ENCODE measurements at regions of chr17 and their contacts with region 1.

Region 1: DNA sequence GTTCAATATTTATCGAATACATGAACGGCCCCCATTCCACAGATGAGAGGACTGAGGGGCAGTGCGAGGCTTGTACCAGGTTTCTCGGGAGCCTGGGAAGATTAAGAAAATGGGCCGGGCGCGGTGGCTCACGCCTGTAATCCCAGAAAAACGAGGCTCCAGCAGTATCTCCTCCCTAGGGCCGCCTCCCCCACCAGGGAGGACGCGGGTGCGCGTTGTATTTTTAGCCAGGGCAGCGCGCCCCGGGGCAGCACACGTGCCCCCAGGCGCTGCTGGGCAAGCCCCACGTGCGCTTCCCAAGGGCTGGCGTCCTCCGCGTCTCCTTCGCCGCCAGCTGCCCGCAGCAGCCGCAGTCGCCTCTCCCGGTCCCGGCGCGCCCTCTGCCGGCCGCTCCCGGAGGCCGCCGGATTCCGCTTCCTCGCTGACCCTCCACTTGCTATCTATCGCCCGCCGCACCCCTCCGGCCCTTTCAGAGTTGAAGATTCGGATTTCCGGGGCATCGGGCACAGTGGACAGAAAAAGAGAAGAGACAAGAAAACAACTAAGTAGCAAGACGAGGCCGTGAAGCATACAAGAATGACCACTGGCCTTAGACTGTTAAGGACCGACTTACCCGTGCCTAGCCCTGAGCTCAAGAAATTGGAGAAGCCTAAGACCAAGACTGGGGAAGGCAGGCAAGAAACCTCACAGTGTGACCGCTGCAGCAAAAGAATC is 1.9 kb upstream of the YBX2 start:
- DNase-seq: peak in 4 of 5 donors; percentile 56 to 68 (median 60)
- H3K4me3 ChIP-seq: no peak overlapping the region
- H3K4me3 Mint-ChIP-seq: peak overlapping the region in 4 of 7 donors; percentile 19 to 48 (median 46)
- H3K27ac ChIP-seq: no peak overlapping the region
- H3K27ac Mint-ChIP-seq: no peak overlapping the region
- H3K4me1 ChIP-seq: peaks cover 24% of the 10 kb centered on the region
- H3K4me1 Mint-ChIP-seq: peaks cover 14 to 27% (median 22%) of the 10 kb centered on the region in 3 donors
- H3K27me3 ChIP-seq: peaks cover 7% of the 10 kb centered on the region
- H3K27me3 Mint-ChIP-seq: peaks cover 19 to 23% of the 10 kb centered on the region in 2 donors

Region 2: GRCh38 chr17:7045909-7046724 is 250.2 kb before region 1 on chr17:
- CTCF ChIA-PET with region 1: interaction called, 13 read pairs
- POLR2A ChIA-PET with region 1: no interaction called
- DNase-seq: peak; percentile 25 to 66 (median 64)
- H3K4me3 ChIP-seq: peak overlapping the region; percentile 67
- H3K4me3 Mint-ChIP-seq: peak overlapping the region; percentile 78 to 93 (median 87)
- H3K27ac ChIP-seq: peak overlapping the region; percentile 53
- H3K27ac Mint-ChIP-seq: peak overlapping the region; percentile 83 to 96 (median 94)
- H3K4me1 ChIP-seq: peaks cover 30% of the 10 kb centered on the region
- H3K4me1 Mint-ChIP-seq: peaks cover 32 to 47% (median 33%) of the 10 kb centered on the region in 3 donors
- H3K27me3 ChIP-seq: no peaks in the 10 kb centered on the region
- H3K27me3 Mint-ChIP-seq: no peaks in the 10 kb centered on the region

Region 3: DNA sequence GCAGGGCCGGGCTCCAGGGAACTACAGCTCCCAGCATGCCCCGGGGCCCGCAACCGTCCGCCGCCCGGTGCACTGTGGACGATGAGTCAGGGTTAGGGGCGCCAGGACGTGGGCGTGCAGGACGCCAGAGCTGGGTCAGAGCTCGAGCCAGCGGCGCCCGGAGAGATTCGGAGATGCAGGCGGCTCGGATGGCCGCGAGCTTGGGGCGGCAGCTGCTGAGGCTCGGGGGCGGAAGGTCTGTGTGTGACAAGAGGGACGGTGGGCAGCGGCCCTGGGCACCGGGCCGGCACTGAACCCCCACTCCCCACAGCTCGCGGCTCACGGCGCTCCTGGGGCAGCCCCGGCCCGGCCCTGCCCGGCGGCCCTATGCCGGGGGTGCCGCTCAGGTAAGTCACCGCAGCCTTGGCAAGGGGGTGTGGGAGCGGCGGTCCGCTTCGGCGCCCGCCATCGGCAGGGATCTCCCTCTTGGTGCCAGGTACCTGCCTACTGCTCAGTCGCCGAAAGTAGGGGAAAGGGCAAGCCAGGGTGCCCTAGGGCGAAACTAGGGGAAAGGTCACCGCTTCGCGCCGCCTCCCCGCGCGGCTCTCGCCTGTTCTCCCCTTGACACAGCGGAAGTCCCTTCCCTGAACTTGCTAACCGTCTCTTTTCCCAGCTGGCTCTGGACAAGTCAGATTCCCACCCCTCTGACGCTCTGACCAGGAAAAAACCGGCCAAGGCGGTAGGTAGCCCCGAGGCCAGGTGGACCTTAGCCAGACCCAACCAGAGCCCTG is 76.3 kb before region 1 on chr17 and contains the starts of genes ACADVL and DLG4:
- CTCF ChIA-PET with region 1: interaction called, 23 read pairs
- POLR2A ChIA-PET with region 1: interaction called, 3 read pairs
- DNase-seq: peak; percentile 65 to 86 (median 70)
- H3K4me3 ChIP-seq: peak within 1 kb of the TSS; percentile 67
- H3K4me3 Mint-ChIP-seq: peak within 1 kb of the TSS; percentile 74 to 96 (median 93)
- H3K27ac ChIP-seq: peak within 1 kb of the TSS; percentile 70
- H3K27ac Mint-ChIP-seq: peak within 1 kb of the TSS; percentile 81 to 100 (median 98)
- H3K4me1 ChIP-seq: peaks cover 54% of the 10 kb centered on the region
- H3K4me1 Mint-ChIP-seq: peaks cover 35 to 62% (median 46%) of the 10 kb centered on the region in 3 donors
- H3K27me3 ChIP-seq: no peaks in the 10 kb centered on the region
- H3K27me3 Mint-ChIP-seq: no peaks in the 10 kb centered on the region
- total RNA-seq, gene ACADVL: 281 to 288 TPM
- total RNA-seq, gene DLG4: 3.5 to 4.4 TPM

Region 4: DNA sequence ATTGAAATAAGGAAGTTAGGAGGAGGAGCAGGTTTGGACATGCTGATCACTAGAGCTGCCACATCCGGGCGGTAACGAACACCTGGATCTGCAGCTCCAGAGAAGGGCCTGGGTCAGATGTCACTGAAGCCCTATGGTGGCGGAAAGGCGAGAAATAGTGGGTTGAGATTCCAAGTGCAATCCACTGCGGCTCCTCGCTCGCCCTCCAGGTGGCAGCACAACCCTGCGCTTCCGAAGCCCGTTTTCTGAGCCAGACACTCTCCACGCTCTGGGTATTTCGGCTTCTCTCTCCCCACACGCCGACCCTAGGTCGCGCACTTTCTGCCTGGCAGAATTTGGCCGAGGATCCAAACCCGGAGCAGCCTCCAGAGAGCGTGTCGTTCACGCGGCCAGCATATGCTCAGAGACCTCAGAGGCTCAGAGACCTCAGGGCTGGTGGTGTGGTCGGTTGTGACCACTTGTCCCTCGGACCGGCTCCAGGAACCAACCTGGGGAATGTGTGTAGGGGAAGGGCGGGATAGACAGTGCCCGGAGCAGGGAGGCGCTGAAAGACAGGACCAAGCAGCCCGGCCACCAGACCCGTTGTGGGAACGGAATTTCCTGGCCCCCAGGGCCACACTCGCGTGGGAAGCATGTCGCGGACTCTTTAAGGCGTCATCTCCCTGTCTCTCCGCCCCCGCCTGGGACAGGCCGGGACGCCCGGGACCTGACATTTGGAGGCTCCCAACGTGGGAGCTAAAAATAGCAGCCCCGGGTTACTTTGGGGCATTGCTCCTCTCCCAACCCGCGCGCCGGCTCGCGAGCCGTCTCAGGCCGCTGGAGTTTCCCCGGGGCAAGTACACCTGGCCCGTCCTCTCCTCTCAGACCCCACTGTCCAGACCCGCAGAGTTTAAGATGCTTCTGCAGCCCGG is 15.6 kb before region 1 on chr17:
- CTCF ChIA-PET with region 1: interaction called, 87 read pairs
- POLR2A ChIA-PET with region 1: interaction called, 6 read pairs
- DNase-seq: peak; percentile 77 to 89 (median 81)
- H3K4me3 ChIP-seq: peak overlapping the region; percentile 54
- H3K4me3 Mint-ChIP-seq: peak overlapping the region; percentile 79 to 92 (median 80)
- H3K27ac ChIP-seq: no peak overlapping the region
- H3K27ac Mint-ChIP-seq: peak overlapping the region in 7 of 8 donors; percentile 56 to 92 (median 71)
- H3K4me1 ChIP-seq: peaks cover 20% of the 10 kb centered on the region
- H3K4me1 Mint-ChIP-seq: peaks cover 13 to 25% (median 14%) of the 10 kb centered on the region in 3 donors
- H3K27me3 ChIP-seq: peaks cover 8% of the 10 kb centered on the region
- H3K27me3 Mint-ChIP-seq: peaks cover 21 to 32% of the 10 kb centered on the region in 2 donors

Region 5: GRCh38 chr17:7306911-7307686 is 10.8 kb after region 1 on chr17 and contains the start of gene EIF5A:
- CTCF ChIA-PET with region 1: interaction called, 17 read pairs
- POLR2A ChIA-PET with region 1: interaction called, 8 read pairs
- DNase-seq: peak; percentile 100
- H3K4me3 ChIP-seq: peak within 1 kb of the TSS; percentile 62
- H3K4me3 Mint-ChIP-seq: peak within 1 kb of the TSS; percentile 92 to 99 (median 95)
- H3K27ac ChIP-seq: peak within 1 kb of the TSS; percentile 98
- H3K27ac Mint-ChIP-seq: peak within 1 kb of the TSS; percentile 97 to 99 (median 99)
- H3K4me1 ChIP-seq: peaks cover 30% of the 10 kb centered on the region
- H3K4me1 Mint-ChIP-seq: peaks cover 36 to 39% (median 38%) of the 10 kb centered on the region in 3 donors
- H3K27me3 ChIP-seq: no peaks in the 10 kb centered on the region
- H3K27me3 Mint-ChIP-seq: peaks cover 0 to 5% of the 10 kb centered on the region in 2 donors
- total RNA-seq, gene EIF5A: 1,533 to 1,595 TPM

Region 6: GRCh38 chr17:7336240-7337175 is 40.2 kb after region 1 on chr17 and contains the start of gene ACAP1:
- CTCF ChIA-PET with region 1: interaction called, 23 read pairs
- POLR2A ChIA-PET with region 1: interaction called, 6 read pairs
- DNase-seq: peak; percentile 78 to 90 (median 81)
- H3K4me3 ChIP-seq: peak within 1 kb of the TSS; percentile 99
- H3K4me3 Mint-ChIP-seq: peak within 1 kb of the TSS; percentile 88 to 98 (median 93)
- H3K27ac ChIP-seq: peak within 1 kb of the TSS; percentile 74
- H3K27ac Mint-ChIP-seq: peak within 1 kb of the TSS; percentile 89 to 98 (median 97)
- H3K4me1 ChIP-seq: peaks cover 69% of the 10 kb centered on the region
- H3K4me1 Mint-ChIP-seq: peaks cover 47 to 68% (median 66%) of the 10 kb centered on the region in 3 donors
- H3K27me3 ChIP-seq: no peaks in the 10 kb centered on the region
- H3K27me3 Mint-ChIP-seq: no peaks in the 10 kb centered on the region
- total RNA-seq, gene ACAP1: 216 to 225 TPM

Region 7: DNA sequence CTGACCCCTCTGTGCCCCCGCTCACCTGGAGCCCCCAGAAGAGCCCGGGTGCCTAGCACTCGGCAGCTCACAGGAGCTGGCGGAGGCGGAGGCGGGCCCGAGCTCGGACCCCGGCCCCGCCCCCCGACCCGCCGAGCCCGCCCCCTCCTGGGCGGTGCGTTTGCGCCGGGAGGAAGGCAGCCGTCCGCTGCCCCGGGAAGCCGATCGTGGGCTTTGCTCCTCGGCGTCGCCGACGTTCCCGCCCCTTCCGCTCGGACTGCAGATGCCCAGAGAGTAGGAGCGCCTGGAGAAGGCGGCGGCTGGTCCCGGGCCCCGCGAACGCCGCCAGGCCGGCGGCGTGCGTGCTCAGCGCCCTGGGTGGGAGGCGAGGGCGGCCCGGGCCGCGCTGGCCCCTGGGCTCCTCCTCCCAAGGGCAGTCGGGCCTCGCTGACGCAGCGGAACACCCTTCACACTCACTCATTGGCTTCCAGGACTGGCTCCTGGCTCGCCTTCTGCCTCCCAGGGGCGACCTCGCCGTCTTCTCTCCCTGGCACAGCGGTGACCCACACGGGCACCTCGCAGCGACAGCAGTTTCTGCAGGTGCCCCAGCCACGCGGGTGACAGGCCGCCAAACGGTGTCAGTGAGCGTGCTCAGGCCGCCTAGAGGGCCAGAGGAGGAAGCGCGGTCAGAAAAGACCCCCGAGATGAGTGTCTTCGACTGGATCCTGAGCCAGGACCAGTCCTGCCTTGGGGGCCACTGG is 98.3 kb after region 1 on chr17 and contains the start of gene PLSCR3:
- CTCF ChIA-PET with region 1: no interaction called
- POLR2A ChIA-PET with region 1: no interaction called
- DNase-seq: peak; percentile 76 to 86 (median 83)
- H3K4me3 ChIP-seq: peak within 1 kb of the TSS; percentile 88
- H3K4me3 Mint-ChIP-seq: peak within 1 kb of the TSS; percentile 91 to 99 (median 95)
- H3K27ac ChIP-seq: peak within 1 kb of the TSS; percentile 80
- H3K27ac Mint-ChIP-seq: peak within 1 kb of the TSS; percentile 90 to 98 (median 96)
- H3K4me1 ChIP-seq: peaks cover 35% of the 10 kb centered on the region
- H3K4me1 Mint-ChIP-seq: peaks cover 21 to 46% (median 27%) of the 10 kb centered on the region in 3 donors
- H3K27me3 ChIP-seq: no peaks in the 10 kb centered on the region
- H3K27me3 Mint-ChIP-seq: no peaks in the 10 kb centered on the region
- total RNA-seq, gene PLSCR3: 79.1 to 81.6 TPM

Measured in CD8-positive, alpha-beta memory T cell (primary cell).